GM12878 (cell line): ENCODE measurements at regions of chr6 and their contacts with region 1.

Region 1: DNA sequence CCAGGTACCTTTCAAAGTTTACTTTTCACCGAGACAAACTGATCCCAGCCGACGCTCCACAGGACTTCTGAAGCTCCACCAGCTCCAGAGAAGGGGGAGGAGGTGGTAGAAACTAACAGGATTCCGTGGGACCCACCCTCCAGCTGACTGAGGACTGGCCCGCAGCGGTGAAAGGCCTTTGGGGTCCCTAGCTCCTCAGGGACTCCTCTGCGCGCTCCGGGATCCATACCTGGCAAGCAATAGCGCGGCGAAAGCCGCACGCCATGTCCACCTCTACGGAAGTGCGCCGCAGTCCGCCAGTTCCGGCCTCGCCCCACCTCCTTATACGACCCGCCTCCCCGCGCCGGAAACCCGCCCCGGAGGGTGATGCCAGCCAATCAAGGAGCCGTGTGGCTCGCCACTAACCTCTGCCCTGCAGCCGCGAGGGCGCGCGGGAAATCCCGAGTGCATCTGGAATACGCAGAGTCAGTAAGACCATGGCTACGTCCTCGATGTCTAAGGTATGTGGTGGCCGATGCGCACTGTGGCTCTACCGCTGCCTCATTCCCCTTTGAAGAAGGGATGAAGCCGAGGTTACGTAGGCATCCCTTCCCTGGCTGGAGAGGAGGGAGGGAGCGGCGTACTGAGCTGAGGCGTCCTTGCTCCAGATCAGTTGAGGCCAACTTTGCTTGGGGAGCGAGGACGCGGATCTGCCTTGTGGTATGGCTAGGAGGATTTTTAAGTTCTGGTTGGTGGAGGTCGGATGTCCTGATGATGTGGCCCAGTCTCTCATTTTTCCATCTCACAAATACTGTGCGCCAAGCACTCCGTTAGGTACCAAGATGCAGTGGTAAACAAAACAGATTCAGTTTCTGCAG is at the starts of genes ORC3 and RARS2:
- DNase-seq: peak; percentile 81
- ATAC-seq: peak; percentile 99
- H3K4me3 ChIP-seq: peak within 1 kb of the TSS; percentile 99
- H3K27ac ChIP-seq: peak within 1 kb of the TSS; percentile 87
- H3K4me1 ChIP-seq: peaks cover 3% of the 10 kb centered on the region; the same call in 1 of the 2 replicates
- H3K27me3 ChIP-seq: no peaks in the 10 kb centered on the region
- CTCF ChIP-seq: no peak
- EP300 ChIP-seq: no peak
- POLR2A ChIP-seq: peak; percentile 93
- RAD21 ChIP-seq: no peak
- polyA plus RNA-seq, gene ORC3: 65.4 to 76.3 TPM
- polyA plus RNA-seq, gene RARS2: 37.9 to 43.0 TPM

Region 2: DNA sequence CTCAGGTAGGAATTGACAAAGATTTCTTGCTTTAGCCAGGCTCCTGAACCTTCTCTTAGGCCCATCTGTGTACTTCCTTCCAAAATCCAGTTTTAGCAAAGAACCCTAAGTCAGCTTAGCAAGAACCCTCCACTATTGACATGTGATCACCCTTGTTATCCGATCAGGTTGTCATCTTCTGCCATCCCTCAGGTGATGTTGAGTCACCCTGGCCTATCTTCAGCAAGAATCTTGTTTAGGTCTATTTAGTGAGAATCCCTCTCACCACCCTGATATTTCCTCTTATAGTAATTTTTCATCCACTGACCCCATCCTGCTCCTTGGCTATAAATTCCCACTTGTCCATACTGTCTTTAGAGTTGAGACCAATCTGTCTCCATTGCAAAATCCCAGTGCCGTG is 456.7 kb before region 1 on chr6:
- CTCF ChIA-PET with region 1: no interaction called
- POLR2A ChIA-PET with region 1: no interaction called
- RAD21 ChIA-PET with region 1: no interaction called
- SMC1A ChIA-PET with region 1: no interaction called
- in situ Hi-C with region 1: no loop called
- intact Hi-C with region 1: loop called (anchors 5 kb)
- DNase-seq: no peak
- ATAC-seq: no peak
- H3K4me3 ChIP-seq: no peak overlapping the region
- H3K27ac ChIP-seq: no peak overlapping the region
- H3K4me1 ChIP-seq: no peaks in the 10 kb centered on the region
- H3K27me3 ChIP-seq: no peaks in the 10 kb centered on the region
- CTCF ChIP-seq: no peak
- EP300 ChIP-seq: no peak
- POLR2A ChIP-seq: no peak
- RAD21 ChIP-seq: no peak

Region 3: DNA sequence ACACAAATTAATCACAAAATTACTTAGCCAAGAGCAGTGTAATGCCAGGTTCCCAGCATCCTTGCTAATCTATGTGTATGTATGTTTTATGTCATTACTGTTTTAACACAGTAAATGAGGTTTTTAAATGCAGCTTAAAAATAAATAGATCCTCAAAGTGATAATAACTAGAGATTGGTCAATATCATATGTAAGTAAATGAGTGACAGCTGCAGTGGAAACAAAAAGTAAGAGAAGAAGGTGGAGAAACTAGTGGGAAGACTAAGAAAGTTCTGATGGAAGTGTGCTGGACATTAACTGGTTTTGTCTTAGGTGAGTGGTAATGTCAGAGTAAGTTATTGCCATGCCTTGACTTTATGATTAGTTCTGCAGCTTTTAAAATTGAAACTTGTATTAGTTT is 259.0 kb before region 1 on chr6:
- CTCF ChIA-PET with region 1: no interaction called
- POLR2A ChIA-PET with region 1: no interaction called
- RAD21 ChIA-PET with region 1: no interaction called
- SMC1A ChIA-PET with region 1: no interaction called
- in situ Hi-C with region 1: no loop called
- intact Hi-C with region 1: no loop called
- DNase-seq: no peak
- ATAC-seq: no peak
- H3K4me3 ChIP-seq: no peak overlapping the region
- H3K27ac ChIP-seq: no peak overlapping the region
- H3K4me1 ChIP-seq: no peaks in the 10 kb centered on the region
- H3K27me3 ChIP-seq: no peaks in the 10 kb centered on the region
- CTCF ChIP-seq: no peak
- EP300 ChIP-seq: no peak
- POLR2A ChIP-seq: no peak
- RAD21 ChIP-seq: no peak

Region 4: DNA sequence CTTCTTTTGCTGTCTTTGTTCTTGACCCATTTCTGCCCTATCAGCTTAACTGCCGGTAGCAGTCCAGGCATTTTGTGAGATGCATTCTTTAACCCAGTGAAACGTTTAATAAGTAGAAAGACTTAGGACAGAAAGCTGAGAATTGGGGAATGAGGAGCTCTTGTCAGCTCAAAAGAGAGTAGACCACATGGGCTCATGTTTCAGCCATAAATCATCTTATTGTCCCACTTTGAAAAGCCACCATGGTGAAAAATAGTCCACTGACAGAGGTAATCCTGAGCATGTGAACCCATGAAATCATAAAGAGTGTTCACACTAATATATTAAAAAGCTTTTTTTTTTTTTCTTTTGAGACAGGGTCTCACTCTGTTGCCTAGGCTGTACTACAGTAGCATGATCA is 16.3 kb after region 1 on chr6:
- CTCF ChIA-PET with region 1: interaction called, 12 read pairs
- POLR2A ChIA-PET with region 1: interaction called, 4 read pairs
- RAD21 ChIA-PET with region 1: interaction called, 3 read pairs
- SMC1A ChIA-PET with region 1: interaction called, 5 read pairs
- in situ Hi-C with region 1: no loop called
- intact Hi-C with region 1: no loop called
- DNase-seq: no peak
- ATAC-seq: no peak
- H3K4me3 ChIP-seq: no peak overlapping the region
- H3K27ac ChIP-seq: no peak overlapping the region
- H3K4me1 ChIP-seq: no peaks in the 10 kb centered on the region
- H3K27me3 ChIP-seq: no peaks in the 10 kb centered on the region
- CTCF ChIP-seq: no peak
- EP300 ChIP-seq: no peak
- POLR2A ChIP-seq: no peak
- RAD21 ChIP-seq: no peak

Region 5: DNA sequence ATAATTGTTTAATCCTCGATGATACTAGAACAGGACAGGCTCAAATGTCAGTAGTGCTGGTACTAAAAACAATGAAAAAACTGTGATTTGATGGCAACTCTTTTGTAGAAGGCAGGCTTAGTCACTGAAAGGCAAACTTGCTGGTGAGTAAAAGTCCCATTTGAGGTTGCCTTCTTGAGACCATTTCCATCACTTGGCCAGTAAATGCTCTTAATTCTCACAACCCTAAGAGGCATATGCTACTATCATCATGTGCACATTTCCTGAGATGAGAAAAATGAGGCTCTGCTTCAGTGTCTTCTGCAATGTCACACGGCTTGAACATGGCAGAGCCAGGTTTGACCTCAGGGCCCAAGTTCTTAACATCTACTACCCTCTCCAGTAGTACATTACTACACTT is 102.2 kb after region 1 on chr6:
- CTCF ChIA-PET with region 1: no interaction called
- POLR2A ChIA-PET with region 1: interaction called, 5 read pairs
- RAD21 ChIA-PET with region 1: interaction called, 5 read pairs
- SMC1A ChIA-PET with region 1: interaction called, 5 read pairs
- in situ Hi-C with region 1: no loop called
- intact Hi-C with region 1: loop called (anchors 5 kb)
- DNase-seq: peak; percentile 43
- ATAC-seq: peak; percentile 9
- H3K4me3 ChIP-seq: no peak overlapping the region
- H3K27ac ChIP-seq: peak overlapping the region; percentile 80
- H3K4me1 ChIP-seq: peaks cover 30% of the 10 kb centered on the region
- H3K27me3 ChIP-seq: no peaks in the 10 kb centered on the region
- CTCF ChIP-seq: no peak
- EP300 ChIP-seq: no peak
- POLR2A ChIP-seq: no peak
- RAD21 ChIP-seq: no peak

Region 6: GRCh38 chr6:87799651-87800050 is 209.7 kb after region 1 on chr6:
- CTCF ChIA-PET with region 1: no interaction called
- POLR2A ChIA-PET with region 1: no interaction called
- RAD21 ChIA-PET with region 1: interaction called, 3 read pairs
- SMC1A ChIA-PET with region 1: interaction called, 3 read pairs
- in situ Hi-C with region 1: no loop called
- intact Hi-C with region 1: loop called (anchors 5 kb)
- DNase-seq: no peak
- ATAC-seq: peak; percentile 29
- H3K4me3 ChIP-seq: no peak overlapping the region
- H3K27ac ChIP-seq: peak overlapping the region; percentile 36; the same call in 1 of the 2 replicates
- H3K4me1 ChIP-seq: peaks cover 34% of the 10 kb centered on the region
- H3K27me3 ChIP-seq: no peaks in the 10 kb centered on the region
- CTCF ChIP-seq: no peak
- EP300 ChIP-seq: no peak
- POLR2A ChIP-seq: no peak
- RAD21 ChIP-seq: no peak